Left cardiac atrium (tissue), 4 donors: ENCODE measurements at regions of chr18 and their contacts with region 1.

Region 1: GRCh38 chr18:57446322-57446721 is 11.1 kb downstream of the ONECUT2 start:
- DNase-seq: no peak
- ATAC-seq: peak in 1 of 2 donors; percentile 47

Region 2: DNA sequence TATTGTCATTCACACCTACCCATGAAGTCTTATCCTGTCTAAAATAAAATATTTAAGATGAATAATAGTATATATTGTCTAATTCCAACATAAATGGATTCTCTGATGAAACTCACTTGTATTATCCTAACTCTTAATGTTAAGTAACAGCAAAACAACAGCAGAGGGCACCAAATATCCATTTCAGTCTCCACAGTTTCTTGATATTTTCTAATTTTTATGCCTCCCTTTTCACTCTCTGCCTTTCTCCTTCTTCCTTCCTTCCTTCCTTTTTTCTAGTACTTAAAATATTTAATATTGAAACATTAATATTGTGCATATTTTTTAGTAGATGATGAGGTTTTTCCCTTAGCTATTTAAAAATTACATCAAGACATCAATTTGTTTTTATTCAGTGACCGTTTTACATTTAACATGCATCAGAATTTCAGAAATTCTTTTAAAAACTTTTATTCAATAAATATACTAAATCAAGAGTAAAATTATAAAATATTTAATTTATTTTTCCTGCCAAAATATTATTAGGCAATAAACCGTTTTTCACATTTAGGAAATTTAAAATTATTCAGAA is 697.5 kb before region 1 on chr18:
- intact Hi-C with region 1: loop called in 1 of 2 experiments (anchors 10 kb)
- DNase-seq: no peak
- ATAC-seq: no peak